ENCODE measurements at regions of chr1 and their contacts with region 1.

Region 1: GRCh38 chr1:174769961-174770549 is 229.7 kb upstream of the CACYBP start:
- DNase-seq: no peak
- H3K4me3 ChIP-seq: peak overlapping the region in 1 of 59 donors; percentile 5
- H3K27ac ChIP-seq: peak overlapping the region in 1 of 59 donors; percentile 24
- H3K27me3 ChIP-seq: no peaks in the 10 kb centered on the region
- CTCF ChIP-seq: peak; percentile 51 to 96 (median 84)

Region 2: DNA sequence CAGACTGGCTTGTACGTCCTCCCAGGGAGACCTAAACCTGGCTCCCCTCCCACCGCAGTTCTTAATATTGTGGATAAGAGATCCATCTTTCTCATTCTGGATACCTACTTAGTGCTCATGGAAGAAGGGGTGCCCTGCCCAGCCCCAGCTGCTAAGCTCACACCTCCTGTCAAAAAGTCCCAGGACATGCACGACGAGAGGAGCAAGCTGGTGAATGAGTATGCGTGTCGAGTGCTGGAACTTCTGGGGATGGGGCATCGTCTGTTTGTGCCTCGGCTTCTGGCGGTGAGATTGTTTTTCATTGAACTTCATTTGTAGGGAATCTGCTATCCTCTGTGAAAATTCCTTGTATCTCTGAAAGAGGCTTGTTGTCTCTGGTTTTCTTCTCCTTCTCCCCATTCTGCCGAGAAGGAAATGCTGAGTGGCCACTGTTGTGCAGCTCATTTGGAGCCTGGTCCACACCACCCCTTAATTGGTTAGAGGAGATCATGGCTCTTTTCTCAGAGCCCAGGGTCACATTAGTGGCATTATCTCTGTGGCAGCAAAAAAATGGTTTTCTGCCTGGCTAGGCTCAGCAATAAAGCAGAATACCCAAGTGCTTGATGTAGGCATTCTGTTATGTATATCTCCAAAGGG is 30.3 kb after region 1 on chr1:
- intact Hi-C with region 1: no loop called
- DNase-seq: peak in 3 of 10 donors; percentile 42 to 53 (median 50)
- H3K4me3 ChIP-seq: peak overlapping the region; percentile 39 to 92 (median 71)
- H3K27ac ChIP-seq: peak overlapping the region; percentile 41 to 97 (median 89)
- H3K27me3 ChIP-seq: no peaks in the 10 kb centered on the region
- CTCF ChIP-seq: no peak

Region 3: GRCh38 chr1:174982971-174983689 is 213.1 kb after region 1 on chr1:
- intact Hi-C with region 1: loop called (anchors 5 kb)
- DNase-seq: peak in 1 of 10 donors; percentile 46
- H3K4me3 ChIP-seq: no peak overlapping the region
- H3K27ac ChIP-seq: peak overlapping the region in 15 of 59 donors; percentile 1 to 70 (median 22)
- H3K27me3 ChIP-seq: no peaks in the 10 kb centered on the region
- CTCF ChIP-seq: peak; percentile 67 to 89 (median 80)

Region 4: GRCh38 chr1:174989536-174990220 is 219.6 kb after region 1 on chr1:
- intact Hi-C with region 1: loop called (anchors 5 kb)
- DNase-seq: no peak
- H3K4me3 ChIP-seq: peak overlapping the region in 55 of 59 donors; percentile 24 to 75 (median 58)
- H3K27ac ChIP-seq: peak overlapping the region in 54 of 59 donors; percentile 31 to 93 (median 77)
- H3K27me3 ChIP-seq: no peaks in the 10 kb centered on the region
- CTCF ChIP-seq: no peak

Region 5: DNA sequence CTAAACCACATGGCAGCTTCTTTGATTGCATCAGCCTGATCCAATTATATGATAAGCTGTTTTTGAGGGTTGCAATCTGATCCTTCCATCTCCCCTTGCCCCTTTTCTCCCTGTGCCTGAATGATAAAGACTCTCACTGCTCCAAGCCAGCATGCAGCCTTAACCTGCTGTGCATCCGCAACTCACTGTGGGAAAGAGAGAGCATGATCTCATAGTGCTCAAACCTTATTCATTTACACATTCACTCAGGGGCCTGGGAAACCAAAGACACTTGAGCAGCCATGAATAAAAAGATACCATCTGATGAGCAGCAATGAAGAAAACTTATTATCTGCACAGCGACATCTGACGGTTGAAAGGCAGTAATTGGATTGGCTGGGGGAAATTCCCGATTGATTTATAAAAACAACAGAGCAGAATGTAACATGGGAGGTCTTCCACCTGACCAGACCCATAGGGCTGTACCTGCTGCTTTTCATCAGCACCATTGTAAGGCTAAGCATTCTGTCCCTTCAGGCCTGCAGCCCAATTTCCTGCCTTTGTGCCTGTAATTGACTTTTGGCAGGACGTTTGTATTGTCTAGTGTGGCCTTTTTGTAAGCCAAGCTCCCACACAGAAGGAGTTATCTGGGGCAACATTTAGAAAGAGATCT is 360.1 kb after region 1 on chr1:
- intact Hi-C with region 1: loop called in 1 of 2 experiments (anchors 5 kb)
- DNase-seq: no peak
- H3K4me3 ChIP-seq: no peak overlapping the region
- H3K27ac ChIP-seq: no peak overlapping the region
- H3K27me3 ChIP-seq: no peaks in the 10 kb centered on the region
- CTCF ChIP-seq: peak in 29 of 56 donors; percentile 11 to 46 (median 29)

Measured in dorsolateral prefrontal cortex (tissue), 120 donors.